ENCODE measurements at regions of chr5 and their contacts with region 1.

Region 1: GRCh38 chr5:134577796-134578363 is 52.4 kb downstream of the JADE2 start:
- DNase-seq: peak; percentile 90
- ATAC-seq: peak; percentile 25

Region 2: DNA sequence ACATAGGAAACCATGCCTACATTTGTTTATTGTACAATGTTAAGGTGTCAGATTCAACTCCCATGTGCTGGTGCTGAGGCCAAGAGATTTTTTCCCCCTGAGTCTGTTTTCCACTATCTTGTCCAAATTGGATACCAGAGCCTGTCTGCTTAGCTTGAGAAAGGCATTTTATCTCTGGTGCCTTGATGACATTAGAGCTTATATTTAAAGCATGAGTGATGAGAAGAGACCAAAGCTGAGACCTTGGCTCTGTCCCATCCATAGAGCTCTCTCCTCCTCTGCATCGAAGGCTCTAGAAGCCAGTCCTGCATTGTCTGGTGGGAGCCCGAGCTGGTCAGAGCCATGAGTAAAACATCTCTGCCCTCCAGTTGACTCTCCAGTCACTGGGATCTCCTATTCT is 341.6 kb before region 1 on chr5:
- intact Hi-C with region 1: no loop called
- DNase-seq: no peak
- ATAC-seq: peak; percentile 64

Region 3: GRCh38 chr5:134370871-134371833 is 206.7 kb before region 1 on chr5 and contains the start of gene UBE2B:
- intact Hi-C with region 1: loop called (anchors 5 kb)
- DNase-seq: peak; percentile 98
- ATAC-seq: peak; percentile 94
- total RNA-seq, gene UBE2B: 258 TPM

Region 4: DNA sequence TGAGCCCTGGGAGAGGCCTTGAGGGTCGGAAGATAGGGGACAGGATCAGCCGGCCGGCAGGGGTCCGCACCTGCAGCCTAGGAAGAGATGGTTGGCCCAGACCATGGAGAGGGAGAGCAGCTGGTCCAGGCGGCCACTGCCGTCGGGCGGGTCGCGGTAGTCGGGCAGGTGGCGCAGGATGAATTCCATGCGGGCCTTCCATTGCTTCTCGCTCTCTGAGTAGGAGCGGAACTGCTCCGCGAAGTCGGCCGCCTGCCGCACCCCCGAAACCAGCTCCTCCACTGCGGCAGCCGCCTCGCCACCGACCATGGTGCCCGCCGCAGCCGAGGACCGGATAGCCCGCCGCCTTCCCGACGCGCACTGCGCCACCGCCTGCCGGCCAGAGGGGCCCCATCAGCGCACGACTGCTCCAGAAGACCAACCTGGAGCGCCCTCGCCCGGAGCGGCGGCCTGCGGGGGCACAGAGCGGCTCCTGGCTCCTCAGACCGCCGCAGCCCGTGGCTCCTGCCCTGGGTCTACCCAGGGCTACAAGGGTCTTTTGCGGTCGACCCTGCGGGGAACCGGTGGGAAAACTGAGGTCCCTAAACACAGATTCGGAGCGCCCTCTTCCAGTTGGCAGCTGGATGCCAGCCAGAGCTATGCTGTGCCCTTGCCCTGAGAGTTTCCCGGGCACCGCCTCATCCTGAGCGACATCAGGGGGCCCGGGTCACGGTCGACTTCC is 166.2 kb before region 1 on chr5 and contains the start of gene CDKN2AIPNL:
- intact Hi-C with region 1: loop called (anchors 5 kb)
- DNase-seq: peak; percentile 96
- ATAC-seq: peak; percentile 100
- total RNA-seq, gene CDKN2AIPNL: 45.7 TPM